ENCODE measurements at regions of chr6 and their contacts with region 1.

Region 1: GRCh38 chr6:36623547-36624459 is 29.6 kb downstream of the SRSF3 start:
- DNase-seq: peak; percentile 91
- ATAC-seq: peak; percentile 78

Region 2: DNA sequence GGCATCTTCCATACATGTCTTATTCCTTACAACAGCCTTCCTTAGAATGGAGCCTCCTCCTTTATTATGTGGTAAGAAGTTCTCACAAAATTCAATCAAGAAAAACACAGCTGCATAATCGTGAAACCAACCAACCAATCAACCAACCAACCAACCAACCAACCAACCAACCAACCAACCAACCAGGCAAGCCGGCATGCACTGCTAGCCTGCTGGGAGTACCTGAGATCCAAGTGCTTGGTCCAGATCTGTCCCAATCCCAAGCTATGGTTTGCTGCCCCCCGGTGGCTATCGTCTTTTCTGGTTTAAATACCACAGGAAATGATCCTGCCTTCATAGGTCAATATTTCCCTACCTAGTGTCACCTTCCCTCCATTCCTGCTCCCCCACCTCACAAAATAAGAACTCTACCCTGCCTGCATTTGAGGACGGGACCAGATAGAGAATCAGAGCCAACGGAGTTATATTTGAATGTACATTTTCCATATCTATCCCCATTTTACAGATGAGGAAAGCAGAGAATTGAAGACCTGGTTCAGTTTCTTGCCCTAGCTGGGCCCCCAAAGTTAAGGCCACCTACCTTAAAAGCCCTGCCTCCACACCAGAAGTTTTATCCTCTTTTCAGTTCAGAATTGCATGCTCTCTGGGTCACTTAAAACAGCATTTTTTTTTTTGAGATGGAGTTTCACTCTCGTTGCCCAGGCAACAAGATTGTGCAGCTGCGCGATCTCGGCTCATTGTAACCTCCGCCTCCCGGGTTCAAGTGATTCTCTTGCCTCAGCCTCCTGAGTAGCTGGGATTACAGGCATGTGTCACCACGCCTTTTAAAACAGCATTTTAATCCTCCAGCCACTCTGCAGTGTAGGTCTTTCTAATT is 100.9 kb after region 1 on chr6:
- intact Hi-C with region 1: loop called (anchors 5 kb)
- DNase-seq: peak; percentile 75
- ATAC-seq: peak; percentile 70

Region 3: DNA sequence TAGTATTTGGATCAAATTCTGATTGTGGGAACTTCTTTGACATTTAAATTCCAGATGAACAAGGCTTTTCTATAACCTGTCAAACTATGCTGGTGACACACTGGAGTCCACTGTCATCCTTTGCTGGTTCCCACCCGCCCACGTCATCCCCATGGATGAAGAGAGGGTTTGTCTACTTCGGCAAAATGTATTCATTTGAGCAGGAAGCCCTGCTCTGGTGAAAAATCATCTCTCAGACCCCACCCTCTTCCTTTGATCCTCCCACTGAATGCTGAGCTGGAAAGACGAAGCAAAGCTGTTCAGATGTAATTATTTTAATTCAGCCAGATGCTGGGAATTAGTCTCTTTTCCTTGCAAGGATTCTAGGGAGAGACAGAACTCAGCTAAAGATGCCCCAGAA is 165.0 kb after region 1 on chr6:
- intact Hi-C with region 1: no loop called
- DNase-seq: no peak
- ATAC-seq: no peak

Measured in Right ventricle myocardium superior (tissue), 1 donor.